CD4-positive, alpha-beta T cell (primary cell): ENCODE measurements at regions of chr22 and their contacts with region 1.

Region 1: DNA sequence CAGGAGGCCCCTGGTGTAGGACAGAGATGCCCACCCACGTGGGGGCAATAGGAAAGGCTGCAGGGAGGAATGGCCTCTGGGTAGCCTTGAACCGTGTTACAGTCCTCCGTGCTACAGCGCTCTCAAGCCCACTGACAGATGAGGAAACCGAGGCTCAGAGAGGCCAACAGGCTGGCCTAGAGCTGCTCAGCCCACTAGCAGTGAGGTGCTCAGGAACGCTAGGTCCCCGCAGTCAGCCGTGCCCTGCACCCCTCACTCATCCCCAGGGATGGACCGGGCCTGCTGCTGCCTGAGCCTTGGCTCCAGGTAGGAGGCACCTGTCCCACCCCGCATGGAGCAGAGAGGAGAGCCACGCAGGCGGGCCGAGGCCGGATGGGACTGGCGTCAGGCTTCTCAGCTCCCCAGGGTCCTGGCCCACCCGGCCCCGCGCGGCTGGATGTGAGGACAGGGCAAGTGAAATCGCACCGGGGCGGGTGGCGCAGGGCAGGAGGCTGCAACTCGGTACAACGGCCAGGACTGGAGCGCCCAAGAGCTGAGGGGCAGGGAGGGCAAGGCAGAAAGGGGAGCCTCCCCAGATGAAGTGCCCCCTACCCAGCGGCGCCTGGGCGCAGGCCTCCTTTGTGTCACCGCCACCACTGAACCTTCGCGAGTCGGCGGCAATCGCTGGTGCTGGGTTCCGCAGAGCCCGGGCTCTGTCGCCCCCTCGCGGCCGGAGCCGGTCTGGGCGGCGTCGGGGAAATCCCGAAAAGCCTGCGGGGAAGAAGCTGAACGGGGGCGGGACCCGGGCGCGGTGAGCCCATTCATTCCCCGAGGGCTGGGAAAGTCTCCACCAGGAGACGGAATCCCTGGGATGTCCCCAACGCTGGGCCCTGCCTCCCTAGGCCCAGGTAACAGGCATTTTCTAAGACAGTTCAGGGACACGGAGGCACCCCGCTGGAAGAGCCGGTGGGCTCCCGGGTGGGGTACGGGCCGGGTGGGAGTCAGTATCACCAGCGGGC is 8.4 kb upstream of the SLC2A11 start:
- DNase-seq: peak; percentile 69 to 91 (median 82)
- ATAC-seq: peak; percentile 99
- H3K4me3 ChIP-seq: no peak overlapping the region
- H3K4me3 Mint-ChIP-seq: no peak overlapping the region
- H3K27ac ChIP-seq: no peak overlapping the region
- H3K27ac Mint-ChIP-seq: no peak overlapping the region
- H3K4me1 ChIP-seq: peaks cover 11% of the 10 kb centered on the region
- H3K4me1 Mint-ChIP-seq: no peaks in the 10 kb centered on the region
- H3K27me3 ChIP-seq: peaks cover 0 to 2% of the 10 kb centered on the region in 2 experiments
- H3K27me3 Mint-ChIP-seq: no peaks in the 10 kb centered on the region
- CTCF ChIP-seq: peak; percentile 97

Region 2: GRCh38 chr22:23539135-23539838 is 310.0 kb before region 1 on chr22:
- CTCF ChIA-PET with region 1: interaction called, 3 read pairs
- POLR2A ChIA-PET with region 1: no interaction called
- intact Hi-C with region 1: loop called (anchors 5 kb)
- DNase-seq: peak; percentile 59 to 88 (median 66)
- ATAC-seq: peak; percentile 100
- H3K4me3 ChIP-seq: no peak overlapping the region
- H3K4me3 Mint-ChIP-seq: peak overlapping the region; percentile 20
- H3K27ac ChIP-seq: no peak overlapping the region
- H3K27ac Mint-ChIP-seq: no peak overlapping the region
- H3K4me1 ChIP-seq: peaks cover 6% of the 10 kb centered on the region
- H3K4me1 Mint-ChIP-seq: peaks cover 10% of the 10 kb centered on the region
- H3K27me3 ChIP-seq: no peaks in the 10 kb centered on the region
- H3K27me3 Mint-ChIP-seq: no peaks in the 10 kb centered on the region
- CTCF ChIP-seq: peak; percentile 81

Region 3: GRCh38 chr22:23626286-23626975 is 222.9 kb before region 1 on chr22:
- CTCF ChIA-PET with region 1: interaction called, 5 read pairs
- POLR2A ChIA-PET with region 1: interaction called, 3 read pairs
- intact Hi-C with region 1: loop called (anchors 1 to 5 kb)
- DNase-seq: no peak
- ATAC-seq: no peak
- H3K4me3 ChIP-seq: no peak overlapping the region
- H3K4me3 Mint-ChIP-seq: no peak overlapping the region
- H3K27ac ChIP-seq: no peak overlapping the region
- H3K27ac Mint-ChIP-seq: no peak overlapping the region
- H3K4me1 ChIP-seq: no peaks in the 10 kb centered on the region
- H3K4me1 Mint-ChIP-seq: no peaks in the 10 kb centered on the region
- H3K27me3 ChIP-seq: no peaks in the 10 kb centered on the region
- H3K27me3 Mint-ChIP-seq: no peaks in the 10 kb centered on the region
- CTCF ChIP-seq: no peak

Region 4: GRCh38 chr22:23632178-23632577 is 217.1 kb before region 1 on chr22 and contains the start of gene DRICH1:
- CTCF ChIA-PET with region 1: interaction called, 5 read pairs
- POLR2A ChIA-PET with region 1: interaction called, 3 read pairs
- intact Hi-C with region 1: loop called (anchors 1 to 5 kb)
- DNase-seq: no peak
- ATAC-seq: no peak
- H3K4me3 ChIP-seq: no peak within 1 kb of the TSS
- H3K4me3 Mint-ChIP-seq: no peak within 1 kb of the TSS
- H3K27ac ChIP-seq: no peak within 1 kb of the TSS
- H3K27ac Mint-ChIP-seq: no peak within 1 kb of the TSS
- H3K4me1 ChIP-seq: no peaks in the 10 kb centered on the region
- H3K4me1 Mint-ChIP-seq: no peaks in the 10 kb centered on the region
- H3K27me3 ChIP-seq: no peaks in the 10 kb centered on the region
- H3K27me3 Mint-ChIP-seq: no peaks in the 10 kb centered on the region
- CTCF ChIP-seq: no peak
- total RNA-seq, gene DRICH1: 1.7 to 2.2 TPM

Region 5: GRCh38 chr22:23688121-23688520 is 161.2 kb before region 1 on chr22:
- CTCF ChIA-PET with region 1: no interaction called
- POLR2A ChIA-PET with region 1: no interaction called
- intact Hi-C with region 1: no loop called
- DNase-seq: no peak
- ATAC-seq: no peak
- H3K4me3 ChIP-seq: no peak overlapping the region
- H3K4me3 Mint-ChIP-seq: no peak overlapping the region
- H3K27ac ChIP-seq: no peak overlapping the region
- H3K27ac Mint-ChIP-seq: no peak overlapping the region
- H3K4me1 ChIP-seq: peaks cover 2% of the 10 kb centered on the region
- H3K4me1 Mint-ChIP-seq: peaks cover 5% of the 10 kb centered on the region
- H3K27me3 ChIP-seq: no peaks in the 10 kb centered on the region
- H3K27me3 Mint-ChIP-seq: no peaks in the 10 kb centered on the region
- CTCF ChIP-seq: no peak

Region 6: GRCh38 chr22:23767673-23768548 is 81.4 kb before region 1 on chr22 and contains the start of gene CHCHD10:
- CTCF ChIA-PET with region 1: interaction called, 4 read pairs
- POLR2A ChIA-PET with region 1: interaction called, 3 read pairs
- intact Hi-C with region 1: loop called (anchors 5 kb)
- DNase-seq: peak; percentile 55 to 84 (median 70)
- ATAC-seq: peak; percentile 72
- H3K4me3 ChIP-seq: peak within 1 kb of the TSS; percentile 85
- H3K4me3 Mint-ChIP-seq: peak within 1 kb of the TSS; percentile 85
- H3K27ac ChIP-seq: peak within 1 kb of the TSS in 1 of 2 donors; percentile 23
- H3K27ac Mint-ChIP-seq: peak within 1 kb of the TSS; percentile 51
- H3K4me1 ChIP-seq: peaks cover 66% of the 10 kb centered on the region
- H3K4me1 Mint-ChIP-seq: peaks cover 29% of the 10 kb centered on the region
- H3K27me3 ChIP-seq: no peaks in the 10 kb centered on the region
- H3K27me3 Mint-ChIP-seq: no peaks in the 10 kb centered on the region
- CTCF ChIP-seq: peak; percentile 62
- total RNA-seq, gene CHCHD10: 34.4 to 43.0 TPM

Region 7: DNA sequence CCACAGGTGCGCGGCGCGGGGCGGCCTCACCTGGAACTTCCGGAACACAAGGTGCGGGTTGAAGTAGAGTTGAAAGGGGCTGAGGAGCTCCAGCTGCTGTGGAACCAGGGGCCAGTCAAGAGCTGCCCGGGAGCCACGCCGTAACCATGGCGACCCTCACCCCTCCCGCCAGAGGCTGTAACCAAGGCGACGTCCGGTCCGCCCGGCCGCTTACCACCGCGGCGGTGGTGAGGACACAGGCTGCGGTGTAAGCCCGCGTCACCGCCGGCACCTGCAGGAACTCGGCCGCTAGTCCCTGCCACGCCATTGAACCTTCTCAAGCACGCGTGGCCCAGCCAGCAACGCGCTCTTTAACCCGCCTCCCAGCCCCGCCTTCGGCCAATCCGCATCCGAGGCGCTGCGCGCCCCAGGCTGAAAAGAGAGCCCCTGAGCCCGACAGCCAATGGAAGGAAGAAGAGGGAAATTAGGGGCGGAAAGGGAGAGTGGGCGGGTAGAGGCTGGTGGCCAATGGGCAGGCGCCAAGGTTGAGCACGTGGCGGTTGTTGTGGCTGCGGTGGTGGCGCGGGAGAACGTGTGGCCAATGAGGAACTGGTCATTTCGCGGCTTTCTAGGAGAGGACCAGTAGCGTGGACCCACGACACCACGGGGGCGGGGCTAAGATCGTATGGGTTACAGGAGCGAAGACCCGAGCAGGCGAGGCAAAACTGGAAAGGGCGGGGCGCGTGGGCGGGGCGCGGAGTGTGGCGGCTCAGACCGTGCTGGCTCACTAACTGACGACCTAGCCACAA is 10.4 kb before region 1 on chr22 and contains the start of gene DERL3:
- CTCF ChIA-PET with region 1: interaction called, 11 read pairs
- POLR2A ChIA-PET with region 1: no interaction called
- intact Hi-C with region 1: no loop called
- DNase-seq: peak; percentile 86 to 98 (median 94)
- ATAC-seq: peak; percentile 94
- H3K4me3 ChIP-seq: peak within 1 kb of the TSS; percentile 80
- H3K4me3 Mint-ChIP-seq: peak within 1 kb of the TSS; percentile 91
- H3K27ac ChIP-seq: no peak within 1 kb of the TSS
- H3K27ac Mint-ChIP-seq: peak within 1 kb of the TSS; percentile 52
- H3K4me1 ChIP-seq: peaks cover 25% of the 10 kb centered on the region
- H3K4me1 Mint-ChIP-seq: peaks cover 19% of the 10 kb centered on the region
- H3K27me3 ChIP-seq: no peaks in the 10 kb centered on the region
- H3K27me3 Mint-ChIP-seq: no peaks in the 10 kb centered on the region
- CTCF ChIP-seq: no peak
- total RNA-seq, gene DERL3: 0.66 to 0.98 TPM

Region 8: DNA sequence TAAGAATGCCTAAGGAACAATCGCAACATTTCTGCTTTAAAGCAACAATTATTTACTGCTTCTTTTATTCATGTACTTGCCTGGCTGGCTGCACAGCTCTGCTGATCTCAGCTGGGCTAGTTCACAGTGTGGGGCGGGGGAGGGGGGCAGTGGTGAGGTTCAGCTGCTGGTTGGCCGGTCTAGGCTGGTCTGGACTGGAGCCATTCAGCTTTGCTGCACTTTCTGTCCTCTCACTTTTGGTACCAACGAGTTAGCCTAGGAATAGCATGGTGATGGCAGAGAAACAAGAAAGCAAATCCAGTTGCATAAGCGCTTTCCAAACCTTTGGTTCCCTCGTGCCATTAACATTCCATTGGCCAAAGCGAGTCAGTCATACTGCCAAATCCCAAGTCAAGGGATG is 28.9 kb after region 1 on chr22:
- CTCF ChIA-PET with region 1: no interaction called
- POLR2A ChIA-PET with region 1: no interaction called
- intact Hi-C with region 1: no loop called
- DNase-seq: no peak
- ATAC-seq: no peak
- H3K4me3 ChIP-seq: no peak overlapping the region
- H3K4me3 Mint-ChIP-seq: no peak overlapping the region
- H3K27ac ChIP-seq: no peak overlapping the region
- H3K27ac Mint-ChIP-seq: no peak overlapping the region
- H3K4me1 ChIP-seq: no peaks in the 10 kb centered on the region
- H3K4me1 Mint-ChIP-seq: no peaks in the 10 kb centered on the region
- H3K27me3 ChIP-seq: no peaks in the 10 kb centered on the region
- H3K27me3 Mint-ChIP-seq: no peaks in the 10 kb centered on the region
- CTCF ChIP-seq: no peak

Region 9: DNA sequence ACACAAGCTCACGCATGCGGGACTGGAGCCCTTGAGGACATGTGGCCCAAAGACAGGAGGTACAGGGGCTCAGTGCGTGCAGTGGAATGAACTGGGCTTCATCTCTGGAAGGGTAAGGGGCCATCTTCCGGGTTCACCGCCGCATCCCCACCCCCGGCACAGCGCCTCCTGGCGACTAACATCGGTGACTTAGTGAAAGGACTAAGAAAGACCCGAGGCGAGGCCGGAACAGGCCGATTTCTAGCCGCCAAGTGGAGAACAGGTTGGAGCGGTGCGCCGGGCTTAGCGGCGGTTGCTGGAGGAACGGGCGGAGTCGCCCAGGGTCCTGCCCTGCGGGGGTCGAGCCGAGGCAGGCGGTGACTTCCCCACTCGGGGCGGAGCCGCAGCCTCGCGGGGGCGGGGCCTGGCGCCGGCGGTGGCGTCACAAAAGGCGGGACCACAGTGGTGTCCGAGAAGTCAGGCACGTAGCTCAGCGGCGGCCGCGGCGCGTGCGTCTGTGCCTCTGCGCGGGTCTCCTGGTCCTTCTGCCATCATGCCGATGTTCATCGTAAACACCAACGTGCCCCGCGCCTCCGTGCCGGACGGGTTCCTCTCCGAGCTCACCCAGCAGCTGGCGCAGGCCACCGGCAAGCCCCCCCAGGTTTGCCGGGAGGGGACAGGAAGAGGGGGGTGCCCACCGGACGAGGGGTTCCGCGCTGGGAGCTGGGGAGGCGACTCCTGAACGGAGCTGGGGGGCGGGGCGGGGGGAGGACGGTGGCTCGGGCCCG is 44.8 kb after region 1 on chr22 and contains the start of gene MIF:
- CTCF ChIA-PET with region 1: interaction called, 10 read pairs
- POLR2A ChIA-PET with region 1: no interaction called
- intact Hi-C with region 1: no loop called
- DNase-seq: peak; percentile 85 to 98 (median 94)
- ATAC-seq: peak; percentile 78
- H3K4me3 ChIP-seq: peak within 1 kb of the TSS; percentile 79
- H3K4me3 Mint-ChIP-seq: peak within 1 kb of the TSS; percentile 95
- H3K27ac ChIP-seq: peak within 1 kb of the TSS; percentile 84 to 91
- H3K27ac Mint-ChIP-seq: peak within 1 kb of the TSS; percentile 97
- H3K4me1 ChIP-seq: peaks cover 30% of the 10 kb centered on the region
- H3K4me1 Mint-ChIP-seq: peaks cover 29% of the 10 kb centered on the region
- H3K27me3 ChIP-seq: no peaks in the 10 kb centered on the region
- H3K27me3 Mint-ChIP-seq: no peaks in the 10 kb centered on the region
- CTCF ChIP-seq: peak; percentile 90
- total RNA-seq, gene MIF: 213 to 226 TPM